Activated B cell treated with CpG ODN at 0.5 μM for 24 hours (primary cell): ENCODE measurements at regions of chr2 and their contacts with region 1.

Region 1: DNA sequence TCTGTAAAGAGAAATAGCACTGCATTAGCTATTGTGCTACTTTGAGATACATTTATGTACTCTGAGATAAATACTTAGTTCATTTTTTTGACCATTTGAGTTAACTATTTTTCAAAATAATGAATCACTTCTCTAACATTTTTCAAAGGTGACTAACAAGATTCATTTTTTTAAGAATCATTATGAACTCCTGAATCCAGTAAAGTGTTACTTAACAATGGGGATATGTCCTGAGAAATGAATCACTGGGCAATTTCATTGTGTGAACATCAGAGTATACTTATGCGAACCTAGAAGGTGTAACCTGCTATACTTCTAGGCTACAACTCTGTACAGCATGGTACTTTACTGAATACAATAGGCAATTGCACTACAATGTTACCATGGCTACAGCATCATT is 355.8 kb downstream of the ARL6IP6 start:
- DNase-seq: no peak
- ATAC-seq: no peak
- H3K4me3 Mint-ChIP-seq: no peak overlapping the region
- H3K27ac Mint-ChIP-seq: no peak overlapping the region
- H3K4me1 Mint-ChIP-seq: no peaks in the 10 kb centered on the region
- H3K27me3 Mint-ChIP-seq: no peaks in the 10 kb centered on the region
- CTCF ChIP-seq: no peak

Region 2: GRCh38 chr2:153059338-153060068 is 14.7 kb before region 1 on chr2:
- CTCF ChIA-PET with region 1: no interaction called
- POLR2A ChIA-PET with region 1: no interaction called
- intact Hi-C with region 1: loop called (anchors 1 kb)
- DNase-seq: no peak
- ATAC-seq: no peak
- H3K4me3 Mint-ChIP-seq: no peak overlapping the region
- H3K27ac Mint-ChIP-seq: no peak overlapping the region
- H3K4me1 Mint-ChIP-seq: no peaks in the 10 kb centered on the region
- H3K27me3 Mint-ChIP-seq: no peaks in the 10 kb centered on the region
- CTCF ChIP-seq: no peak